Activated T-helper 2 cell treated with anti-CD3 and anti-CD28 coated beads, Interferon-gamma antibody, Interleukin-2, Interleukin-4, amounts not matched to agents 10 μg/mL and 5 μg/mL and 100 μg/mL, durations not matched to agents 14 hours and 24 hours and 36 hours (primary cell): ENCODE measurements at regions of chr3 and their contacts with region 1.

Region 1: GRCh38 chr3:16520970-16521881 is 7.7 kb upstream of the RFTN1 start:
- DNase-seq: no peak
- H3K4me3 Mint-ChIP-seq: no peak overlapping the region
- H3K27ac Mint-ChIP-seq: peak overlapping the region; percentile 43
- H3K4me1 Mint-ChIP-seq: peaks cover 45% of the 10 kb centered on the region
- H3K27me3 Mint-ChIP-seq: no peaks in the 10 kb centered on the region

Region 2: DNA sequence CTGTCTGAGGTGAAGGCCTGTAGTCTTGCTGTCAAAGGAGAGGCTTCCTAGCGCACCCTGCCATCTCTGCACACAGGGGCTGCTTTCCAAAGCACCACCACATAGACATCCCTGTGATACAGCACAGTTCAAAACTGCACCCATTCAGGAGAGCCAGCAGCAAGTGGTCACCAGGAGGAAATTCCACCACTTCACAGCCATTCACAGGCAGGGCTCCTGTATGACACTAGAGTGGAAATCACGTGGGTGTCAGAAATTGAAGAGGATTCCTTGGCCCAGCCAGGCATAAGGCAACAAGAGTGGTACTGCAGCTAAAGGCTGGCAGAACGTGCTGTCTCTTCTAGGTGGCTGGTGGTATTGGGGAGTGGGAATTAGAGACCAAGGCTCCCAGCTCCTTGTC is 110.6 kb before region 1 on chr3:
- intact Hi-C with region 1: no loop called
- DNase-seq: no peak
- H3K4me3 Mint-ChIP-seq: no peak overlapping the region
- H3K27ac Mint-ChIP-seq: peak overlapping the region; percentile 8
- H3K4me1 Mint-ChIP-seq: peaks cover 27% of the 10 kb centered on the region
- H3K27me3 Mint-ChIP-seq: no peaks in the 10 kb centered on the region

Region 3: GRCh38 chr3:16482770-16483531 is 38.3 kb before region 1 on chr3:
- intact Hi-C with region 1: loop called (anchors 2 kb)
- DNase-seq: peak; percentile 38
- H3K4me3 Mint-ChIP-seq: peak overlapping the region; percentile 37
- H3K27ac Mint-ChIP-seq: peak overlapping the region; percentile 59
- H3K4me1 Mint-ChIP-seq: peaks cover 61% of the 10 kb centered on the region
- H3K27me3 Mint-ChIP-seq: no peaks in the 10 kb centered on the region

Region 4: GRCh38 chr3:16633948-16634347 is 112.7 kb after region 1 on chr3:
- intact Hi-C with region 1: no loop called
- DNase-seq: no peak
- H3K4me3 Mint-ChIP-seq: no peak overlapping the region
- H3K27ac Mint-ChIP-seq: no peak overlapping the region
- H3K4me1 Mint-ChIP-seq: no peaks in the 10 kb centered on the region
- H3K27me3 Mint-ChIP-seq: peaks cover 12% of the 10 kb centered on the region

Region 5: DNA sequence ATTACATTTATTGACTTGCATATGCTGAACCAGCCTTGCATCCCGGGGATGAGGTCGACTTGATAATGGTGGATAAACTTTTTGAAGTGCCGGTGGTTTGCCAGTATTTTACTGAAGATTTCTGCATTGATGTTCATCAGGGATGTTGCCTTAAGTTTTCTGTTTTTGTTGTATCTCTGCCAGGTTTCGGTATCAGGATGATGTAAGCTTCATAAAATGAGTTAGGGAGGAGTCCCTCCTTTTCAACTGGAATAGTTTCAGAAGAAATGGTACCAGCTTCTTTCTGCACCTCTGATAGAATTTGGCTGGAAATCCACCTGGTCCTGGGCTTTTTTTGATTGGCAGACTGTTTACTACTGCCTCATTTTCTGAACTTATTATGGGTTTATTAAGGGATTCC is 970.4 kb after region 1 on chr3:
- intact Hi-C with region 1: no loop called
- DNase-seq: no peak
- H3K4me3 Mint-ChIP-seq: no peak overlapping the region
- H3K27ac Mint-ChIP-seq: no peak overlapping the region
- H3K4me1 Mint-ChIP-seq: no peaks in the 10 kb centered on the region
- H3K27me3 Mint-ChIP-seq: no peaks in the 10 kb centered on the region